PC-3 (cell line): ENCODE measurements at regions of chr3 and their contacts with region 1.

Region 1: DNA sequence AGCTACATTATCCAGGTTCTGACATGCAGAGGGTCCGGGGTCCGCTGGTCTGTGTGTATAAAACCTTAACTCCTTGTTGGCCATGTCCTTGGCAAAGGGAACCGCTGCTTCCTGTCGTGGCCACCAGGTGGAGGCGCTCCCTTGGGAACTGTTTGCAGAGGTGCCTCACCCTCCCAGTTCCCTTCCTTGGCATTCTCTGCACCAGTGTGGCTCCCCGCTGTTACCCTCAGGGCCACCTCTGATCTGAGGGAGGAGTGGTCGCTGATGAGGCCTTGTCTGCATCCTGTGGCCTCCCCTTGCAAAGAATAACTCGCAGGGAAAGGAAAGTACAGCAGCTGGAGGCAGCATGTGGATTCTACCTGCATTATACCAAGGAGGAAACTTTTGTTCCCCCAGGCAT is 89.6 kb downstream of the CHRD start:
- DNase-seq: peak; percentile 66
- ATAC-seq: peak; percentile 85
- H3K4me3 ChIP-seq: no peak overlapping the region
- H3K27ac ChIP-seq: no peak overlapping the region
- H3K4me1 ChIP-seq: no peaks in the 10 kb centered on the region
- H3K27me3 ChIP-seq: peaks cover 36% of the 10 kb centered on the region
- CTCF ChIP-seq: peak; percentile 93

Region 2: DNA sequence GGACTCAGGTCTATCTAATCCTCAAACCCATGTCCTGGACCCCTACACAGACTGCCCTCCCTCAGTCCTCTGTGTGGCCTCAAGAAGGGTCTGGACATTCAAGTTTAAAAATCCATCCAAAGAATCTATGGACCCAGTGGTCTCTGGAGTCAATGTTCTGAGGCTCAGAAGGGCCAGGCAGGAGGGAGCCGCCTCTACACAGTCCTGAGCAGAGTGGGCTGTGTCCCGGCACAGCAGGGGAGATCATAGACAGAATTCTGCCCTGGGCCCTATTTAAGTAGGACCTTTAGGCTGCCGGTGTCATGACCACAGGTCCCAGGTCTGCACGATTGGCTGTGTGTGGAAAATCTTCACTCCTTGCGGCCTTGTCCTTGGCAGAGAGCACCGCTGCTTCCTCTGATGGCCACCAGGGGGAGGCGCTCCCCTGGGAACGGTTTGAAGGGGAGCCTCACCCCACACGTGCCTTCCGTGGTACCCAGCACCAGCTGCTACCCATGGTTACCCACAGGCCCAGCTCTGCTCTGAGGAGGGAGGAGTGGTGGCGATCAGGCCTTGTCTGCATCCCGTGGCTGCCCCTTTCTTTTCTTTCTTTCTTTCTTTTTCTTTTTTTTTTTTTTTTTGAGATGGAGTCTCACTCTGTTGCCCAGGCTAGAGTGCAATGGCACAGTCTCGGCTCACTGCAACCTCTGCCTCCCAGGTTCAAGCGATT is 51.6 kb before region 1 on chr3:
- CTCF ChIA-PET with region 1: interaction called, 11 read pairs
- POLR2A ChIA-PET with region 1: no interaction called
- intact Hi-C with region 1: loop called (anchors 1 kb)
- DNase-seq: peak; percentile 69
- ATAC-seq: peak; percentile 96
- H3K4me3 ChIP-seq: no peak overlapping the region
- H3K27ac ChIP-seq: no peak overlapping the region
- H3K4me1 ChIP-seq: no peaks in the 10 kb centered on the region
- H3K27me3 ChIP-seq: 0 out of 2 replicates have a peak, but pooled peaks cover 2% of the 10 kb centered on the region
- CTCF ChIP-seq: peak; percentile 89